Ovary (tissue), 10 donors: ENCODE measurements at regions of chr5 and their contacts with region 1.

Region 1: GRCh38 chr5:131589510-131590348 is 45.3 kb downstream of the RAPGEF6 start:
- DNase-seq: peak in 2 of 5 donors; percentile 22 to 25
- H3K4me3 ChIP-seq: no peak overlapping the region
- H3K27ac ChIP-seq: no peak overlapping the region
- H3K4me1 ChIP-seq: peaks cover 4% of the 10 kb centered on the region
- H3K27me3 ChIP-seq: no peaks in the 10 kb centered on the region
- CTCF ChIP-seq: peak; percentile 70 to 83 (median 72)
- EP300 ChIP-seq: no peak
- POLR2A ChIP-seq: no peak

Region 2: DNA sequence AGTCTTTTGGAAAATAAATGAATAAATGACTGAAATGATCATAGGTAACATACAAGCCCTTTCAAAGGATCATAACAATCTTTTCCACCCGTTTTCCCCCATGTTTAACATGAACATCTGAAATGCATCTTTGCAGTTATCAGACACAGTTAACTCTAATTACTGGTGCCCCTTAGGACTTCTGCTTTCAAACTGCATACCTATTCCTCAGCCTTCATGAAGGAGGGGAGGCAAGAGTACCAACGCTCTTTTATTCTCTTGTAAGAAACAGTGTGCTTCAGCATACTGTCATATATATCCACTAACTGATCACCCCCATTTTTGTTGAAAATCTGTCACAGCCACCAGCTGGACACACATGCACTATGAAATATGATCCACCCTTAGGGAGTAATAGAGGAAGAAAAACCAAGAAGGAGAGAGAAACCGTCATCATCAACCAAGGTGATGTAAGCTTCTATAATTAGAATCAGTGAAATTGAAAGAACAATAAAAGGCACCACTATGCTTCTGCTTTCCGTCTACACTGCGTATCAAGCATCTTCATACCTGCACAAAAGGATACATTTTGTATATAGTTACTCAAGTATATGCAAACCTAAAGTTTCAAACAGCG is 53.4 kb before region 1 on chr5:
- intact Hi-C with region 1: no loop called
- DNase-seq: no peak
- H3K4me3 ChIP-seq: no peak overlapping the region
- H3K27ac ChIP-seq: no peak overlapping the region
- H3K4me1 ChIP-seq: no peaks in the 10 kb centered on the region
- H3K27me3 ChIP-seq: no peaks in the 10 kb centered on the region
- CTCF ChIP-seq: no peak
- EP300 ChIP-seq: no peak
- POLR2A ChIP-seq: no peak

Region 3: DNA sequence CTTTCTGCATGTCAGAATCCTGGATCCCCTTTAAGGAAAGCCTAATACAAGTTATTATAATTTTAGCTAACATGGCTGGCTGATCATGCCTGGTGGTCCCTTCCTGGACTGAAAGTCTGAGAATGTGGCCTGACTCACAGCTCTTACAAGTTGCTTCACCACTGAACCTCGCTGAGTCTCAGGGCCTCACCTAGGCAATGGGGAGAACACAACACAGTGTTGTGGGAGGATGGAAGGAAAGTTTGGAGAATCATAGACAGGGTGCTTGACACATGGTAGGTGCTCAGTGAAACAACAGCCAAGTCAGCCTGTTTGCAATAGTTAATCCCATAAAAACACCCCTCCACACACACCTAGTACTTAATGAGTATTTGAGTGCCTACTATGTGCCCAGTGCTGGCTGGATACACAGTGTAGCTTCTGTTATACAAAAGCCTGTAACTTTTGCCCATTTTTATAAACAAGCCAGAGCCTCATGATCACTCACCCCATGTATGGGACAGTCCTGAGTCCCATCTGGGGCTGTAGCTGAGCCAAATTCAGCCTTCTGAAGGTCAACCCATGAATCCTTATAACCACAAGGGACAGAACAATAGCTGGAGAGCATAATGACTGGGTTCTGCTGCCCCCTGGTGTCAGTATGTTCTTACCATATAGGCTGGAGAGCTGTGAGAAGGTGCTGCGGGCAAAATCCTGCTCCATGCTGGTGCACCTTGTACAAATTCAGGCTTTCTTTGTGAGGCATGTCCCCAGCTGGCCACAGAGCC is 417.9 kb after region 1 on chr5:
- intact Hi-C with region 1: loop called in 2 of 4 experiments (anchors 5 to 10 kb)
- DNase-seq: peak; percentile 19 to 63 (median 49)
- H3K4me3 ChIP-seq: no peak overlapping the region
- H3K27ac ChIP-seq: no peak overlapping the region
- H3K4me1 ChIP-seq: peaks cover 7% of the 10 kb centered on the region
- H3K27me3 ChIP-seq: no peaks in the 10 kb centered on the region
- CTCF ChIP-seq: peak in 2 of 3 donors; percentile 33 to 39
- EP300 ChIP-seq: no peak
- POLR2A ChIP-seq: no peak

Region 4: DNA sequence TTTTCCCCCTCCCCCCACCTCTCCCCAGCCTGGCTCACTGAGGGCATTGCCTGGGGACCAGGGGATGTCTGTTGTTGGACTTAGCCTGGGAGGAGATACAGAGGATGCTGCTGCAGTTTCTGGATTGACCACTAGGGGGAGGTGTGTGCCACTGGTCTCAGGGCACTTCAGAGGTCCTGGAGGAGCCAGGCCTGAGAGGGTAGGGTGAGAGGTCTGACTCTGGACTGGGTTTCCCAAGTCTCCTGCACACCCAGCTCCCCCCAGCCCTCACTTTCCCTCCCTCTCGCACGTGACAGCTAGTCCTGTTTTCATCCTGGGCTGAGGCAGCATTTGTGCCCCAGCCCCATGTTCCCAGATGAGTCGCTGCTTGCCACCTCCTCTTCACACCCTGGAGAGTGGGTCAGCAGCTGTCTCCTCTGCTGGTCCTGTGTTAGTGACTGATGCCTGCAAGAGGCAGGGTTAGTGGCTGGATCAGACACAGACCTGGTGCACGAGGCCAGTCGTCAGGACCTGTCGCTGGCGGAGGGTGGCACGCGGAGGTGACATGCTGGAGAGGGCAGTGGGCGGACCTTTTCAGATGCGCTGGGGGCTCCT is 475.1 kb after region 1 on chr5:
- intact Hi-C with region 1: loop called in 3 of 4 experiments (anchors 5 to 10 kb)
- DNase-seq: peak; percentile 27 to 57 (median 56)
- H3K4me3 ChIP-seq: no peak overlapping the region
- H3K27ac ChIP-seq: no peak overlapping the region
- H3K4me1 ChIP-seq: no peaks in the 10 kb centered on the region
- H3K27me3 ChIP-seq: no peaks in the 10 kb centered on the region
- CTCF ChIP-seq: peak in 2 of 3 donors; percentile 35 to 42
- EP300 ChIP-seq: no peak
- POLR2A ChIP-seq: no peak